Naive thymus-derived CD4-positive, alpha-beta T cell (primary cell): ENCODE measurements at regions of chr4 and their contacts with region 1.

Region 1: GRCh38 chr4:165537028-165537648 is 158.3 kb downstream of the CPE start:
- DNase-seq: peak in 3 of 9 donors; percentile 10 to 19 (median 10)
- ATAC-seq: no peak
- H3K4me3 ChIP-seq: no peak overlapping the region
- H3K4me3 Mint-ChIP-seq: no peak overlapping the region
- H3K27ac ChIP-seq: no peak overlapping the region
- H3K27ac Mint-ChIP-seq: no peak overlapping the region
- H3K4me1 ChIP-seq: no peaks in the 10 kb centered on the region
- H3K4me1 Mint-ChIP-seq: no peaks in the 10 kb centered on the region
- H3K27me3 ChIP-seq: no peaks in the 10 kb centered on the region
- H3K27me3 Mint-ChIP-seq: peaks cover 0 to 9% (median 8%) of the 10 kb centered on the region in 5 donors

Region 2: DNA sequence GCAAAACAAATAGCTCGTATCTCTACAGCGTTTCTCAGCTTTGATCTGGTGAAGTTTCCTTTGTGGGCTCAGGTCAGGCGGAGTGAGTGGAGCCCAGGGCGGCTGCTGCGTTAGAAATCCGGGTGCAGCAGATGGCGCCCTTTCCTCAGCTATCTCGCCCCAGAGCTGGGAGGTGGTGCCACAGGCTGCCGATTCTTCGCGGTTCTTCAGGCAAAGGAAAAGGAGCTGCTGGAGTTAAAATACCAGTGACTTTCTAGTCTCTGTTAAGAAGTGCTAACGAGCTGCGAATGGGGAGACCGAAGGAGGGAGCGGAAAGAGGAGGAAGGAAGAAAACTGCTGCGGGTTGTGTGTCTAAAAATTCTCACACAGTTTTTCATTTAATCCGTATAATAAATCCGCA is 43.8 kb before region 1 on chr4:
- CTCF ChIA-PET with region 1: no interaction called
- POLR2A ChIA-PET with region 1: no interaction called
- intact Hi-C with region 1: loop called in 1 of 2 experiments (anchors 1 kb)
- DNase-seq: peak; percentile 30 to 66 (median 58)
- ATAC-seq: peak; percentile 85
- H3K4me3 ChIP-seq: no peak overlapping the region
- H3K4me3 Mint-ChIP-seq: peak overlapping the region in 9 of 10 donors; percentile 56 to 84 (median 68)
- H3K27ac ChIP-seq: no peak overlapping the region
- H3K27ac Mint-ChIP-seq: no peak overlapping the region
- H3K4me1 ChIP-seq: no peaks in the 10 kb centered on the region
- H3K4me1 Mint-ChIP-seq: peaks cover 3 to 8% (median 4%) of the 10 kb centered on the region in 7 donors
- H3K27me3 ChIP-seq: peaks cover 0 to 3% of the 10 kb centered on the region in 2 donors
- H3K27me3 Mint-ChIP-seq: peaks cover 20 to 36% (median 26%) of the 10 kb centered on the region in 5 donors

Region 3: GRCh38 chr4:165612936-165613335 is 75.8 kb after region 1 on chr4:
- CTCF ChIA-PET with region 1: no interaction called
- POLR2A ChIA-PET with region 1: no interaction called
- intact Hi-C with region 1: loop called in 1 of 2 experiments (anchors 5 kb)
- DNase-seq: no peak
- ATAC-seq: no peak
- H3K4me3 ChIP-seq: no peak overlapping the region
- H3K4me3 Mint-ChIP-seq: peak overlapping the region in 1 of 10 donors; percentile 26
- H3K27ac ChIP-seq: no peak overlapping the region
- H3K27ac Mint-ChIP-seq: no peak overlapping the region
- H3K4me1 ChIP-seq: no peaks in the 10 kb centered on the region
- H3K4me1 Mint-ChIP-seq: peaks cover 0 to 22% (median 0%) of the 10 kb centered on the region in 7 donors
- H3K27me3 ChIP-seq: no peaks in the 10 kb centered on the region
- H3K27me3 Mint-ChIP-seq: peaks cover 0 to 10% (median 0%) of the 10 kb centered on the region in 5 donors

Region 4: GRCh38 chr4:165700855-165701254 is 163.7 kb after region 1 on chr4:
- CTCF ChIA-PET with region 1: no interaction called
- POLR2A ChIA-PET with region 1: no interaction called
- intact Hi-C with region 1: loop called in 1 of 2 experiments (anchors 1 kb)
- DNase-seq: no peak
- ATAC-seq: no peak
- H3K4me3 ChIP-seq: no peak overlapping the region
- H3K4me3 Mint-ChIP-seq: no peak overlapping the region
- H3K27ac ChIP-seq: no peak overlapping the region
- H3K27ac Mint-ChIP-seq: no peak overlapping the region
- H3K4me1 ChIP-seq: no peaks in the 10 kb centered on the region
- H3K4me1 Mint-ChIP-seq: no peaks in the 10 kb centered on the region
- H3K27me3 ChIP-seq: no peaks in the 10 kb centered on the region
- H3K27me3 Mint-ChIP-seq: no peaks in the 10 kb centered on the region

Region 5: GRCh38 chr4:166091912-166092510 is 554.9 kb after region 1 on chr4:
- CTCF ChIA-PET with region 1: no interaction called
- POLR2A ChIA-PET with region 1: no interaction called
- intact Hi-C with region 1: loop called in 1 of 2 experiments (anchors 1 kb)
- DNase-seq: peak in 3 of 9 donors; percentile 1 to 11 (median 3)
- ATAC-seq: no peak
- H3K4me3 ChIP-seq: no peak overlapping the region
- H3K4me3 Mint-ChIP-seq: no peak overlapping the region
- H3K27ac ChIP-seq: no peak overlapping the region
- H3K27ac Mint-ChIP-seq: no peak overlapping the region
- H3K4me1 ChIP-seq: no peaks in the 10 kb centered on the region
- H3K4me1 Mint-ChIP-seq: no peaks in the 10 kb centered on the region
- H3K27me3 ChIP-seq: no peaks in the 10 kb centered on the region
- H3K27me3 Mint-ChIP-seq: no peaks in the 10 kb centered on the region

Region 6: DNA sequence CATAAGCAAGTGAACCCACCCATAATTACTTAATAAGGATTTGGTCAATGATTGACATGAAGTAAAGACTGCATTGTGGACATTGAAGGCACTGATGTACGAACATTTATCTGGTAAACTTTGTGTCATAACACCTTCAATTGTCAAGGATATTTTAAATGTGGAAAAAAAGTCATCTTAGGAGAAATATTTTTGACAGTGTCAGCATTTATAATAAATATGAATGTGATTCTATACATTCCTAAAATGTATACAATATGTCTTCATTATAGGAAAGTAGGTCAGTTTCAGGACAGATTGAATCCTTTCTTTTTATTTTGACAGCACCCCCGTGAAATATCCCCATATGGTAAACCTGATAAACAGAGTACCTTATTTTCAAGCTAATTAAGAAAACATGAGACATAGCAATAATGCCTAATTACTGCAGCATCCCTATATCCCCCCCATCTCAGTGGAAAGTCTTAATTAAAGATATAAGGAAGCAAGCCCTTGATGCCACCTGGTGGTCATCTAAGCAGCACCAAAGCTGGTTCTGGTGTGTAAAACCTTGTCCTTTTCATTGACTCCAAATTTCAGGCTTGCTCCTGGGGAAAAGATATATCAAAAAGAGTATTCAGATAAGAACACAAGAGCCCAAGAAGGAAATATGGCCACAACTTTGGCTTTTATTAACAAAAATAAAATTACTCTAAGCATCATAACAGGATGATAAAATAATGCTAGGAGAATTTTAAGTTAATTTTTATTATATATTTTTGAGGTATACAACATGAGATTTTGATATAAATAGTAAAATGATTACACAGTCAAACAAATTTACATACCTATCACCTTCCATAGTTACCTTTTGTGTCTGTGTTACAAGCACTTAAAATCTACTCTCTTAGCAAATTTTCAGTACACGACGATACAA is 715.6 kb after region 1 on chr4:
- CTCF ChIA-PET with region 1: no interaction called
- POLR2A ChIA-PET with region 1: no interaction called
- intact Hi-C with region 1: loop called in 1 of 2 experiments (anchors 5 kb)
- DNase-seq: no peak
- ATAC-seq: no peak
- H3K4me3 ChIP-seq: no peak overlapping the region
- H3K4me3 Mint-ChIP-seq: no peak overlapping the region
- H3K27ac ChIP-seq: no peak overlapping the region
- H3K27ac Mint-ChIP-seq: no peak overlapping the region
- H3K4me1 ChIP-seq: no peaks in the 10 kb centered on the region
- H3K4me1 Mint-ChIP-seq: no peaks in the 10 kb centered on the region
- H3K27me3 ChIP-seq: no peaks in the 10 kb centered on the region
- H3K27me3 Mint-ChIP-seq: no peaks in the 10 kb centered on the region